SK-N-SH (cell line): ENCODE measurements at regions of chr7 and their contacts with region 1.

Region 1: DNA sequence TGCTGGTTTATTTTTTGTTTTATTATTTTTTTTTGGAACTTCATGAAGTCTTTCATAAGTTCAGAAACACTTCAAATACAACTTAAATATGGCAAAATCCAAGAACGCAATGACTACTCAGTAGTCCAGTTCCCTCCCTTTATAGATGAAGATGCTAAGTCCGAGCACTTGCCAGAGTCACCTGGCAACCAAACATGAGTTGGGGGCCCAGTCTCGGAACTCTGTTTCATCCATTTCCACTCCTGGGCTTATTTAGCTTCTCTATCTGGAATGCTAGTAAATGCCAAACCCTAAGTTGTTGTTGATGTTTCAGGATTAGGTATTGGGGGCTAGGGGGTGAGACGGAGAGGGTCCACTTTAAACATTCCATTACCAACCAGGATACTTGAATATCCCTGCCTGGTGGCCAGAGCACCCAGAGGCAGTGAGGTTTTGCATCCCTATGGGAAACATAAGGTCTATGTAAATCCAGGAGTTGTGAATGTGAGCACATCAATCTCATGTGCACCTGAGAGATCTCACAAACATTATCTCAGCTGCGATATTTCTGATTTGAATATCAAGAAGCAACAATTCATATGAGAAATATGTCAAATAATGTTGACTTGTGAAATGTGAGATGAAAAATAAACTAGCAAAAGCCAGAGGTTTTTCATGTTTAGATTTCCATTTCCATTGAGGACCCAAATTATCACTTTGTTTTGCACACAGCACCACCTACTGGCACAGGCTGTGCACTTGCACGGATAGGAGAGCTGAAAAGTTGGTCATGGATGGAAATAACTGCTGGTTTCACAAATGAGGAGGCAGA is 129.3 kb downstream of the PKD1L1 start:
- DNase-seq: peak; percentile 81
- H3K4me3 ChIP-seq: no peak overlapping the region
- H3K27ac ChIP-seq: peak overlapping the region; percentile 48 to 66; a peak in 3 of 4 replicates
- H3K4me1 ChIP-seq: peaks cover 7 to 14% of the 10 kb centered on the region in 2 experiments; a peak in 2 of 4 replicates
- H3K27me3 ChIP-seq: no peaks in the 10 kb centered on the region
- CTCF ChIP-seq: peak; percentile 100
- EP300 ChIP-seq: no peak
- RAD21 ChIP-seq: peak; percentile 99

Region 2: GRCh38 chr7:47418601-47419381 is 400.2 kb before region 1 on chr7:
- CTCF ChIA-PET with region 1: interaction called, 10 read pairs
- POLR2A ChIA-PET with region 1: no interaction called
- DNase-seq: no peak
- H3K4me3 ChIP-seq: no peak overlapping the region
- H3K27ac ChIP-seq: no peak overlapping the region
- H3K4me1 ChIP-seq: peaks cover 0 to 3% of the 10 kb centered on the region in 2 experiments; a peak in 1 of 4 replicates
- H3K27me3 ChIP-seq: no peaks in the 10 kb centered on the region
- CTCF ChIP-seq: no peak
- EP300 ChIP-seq: no peak
- RAD21 ChIP-seq: no peak

Region 3: DNA sequence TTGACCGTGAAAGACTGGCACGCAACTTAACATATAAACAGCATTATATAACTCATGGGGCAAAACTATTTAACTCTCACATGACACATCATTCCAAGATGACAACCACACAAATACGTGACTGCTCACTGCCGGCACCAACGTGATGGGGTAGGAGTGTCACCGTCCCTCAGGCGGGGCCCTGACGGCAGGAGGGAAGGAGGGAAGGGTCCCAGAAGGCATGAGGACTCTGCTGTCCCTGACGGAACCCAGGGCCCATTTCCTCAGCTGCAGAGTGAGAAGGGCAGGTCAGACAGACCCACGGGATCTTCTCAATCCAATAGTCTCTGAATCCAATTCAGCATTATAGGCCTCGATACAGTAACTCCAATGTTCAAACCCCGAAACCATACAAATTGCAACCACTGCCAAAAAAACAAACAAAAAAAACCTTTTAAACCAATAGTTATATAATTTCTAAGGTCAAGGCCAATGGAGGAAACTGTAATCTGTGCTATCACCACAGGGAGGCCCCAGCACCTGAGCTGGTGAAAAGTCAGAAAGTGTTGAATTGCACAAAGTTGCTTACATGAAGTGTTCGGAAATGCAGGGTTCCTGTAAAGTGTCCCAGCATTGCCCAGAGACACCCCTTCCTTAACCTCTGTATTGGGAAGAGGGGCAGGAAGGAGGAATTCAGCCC is 374.5 kb before region 1 on chr7:
- CTCF ChIA-PET with region 1: interaction called, 23 read pairs
- POLR2A ChIA-PET with region 1: no interaction called
- DNase-seq: peak; percentile 49
- H3K4me3 ChIP-seq: no peak overlapping the region
- H3K27ac ChIP-seq: no peak overlapping the region
- H3K4me1 ChIP-seq: peaks cover 0 to 11% of the 10 kb centered on the region in 2 experiments; a peak in 2 of 4 replicates
- H3K27me3 ChIP-seq: no peaks in the 10 kb centered on the region
- CTCF ChIP-seq: peak; percentile 76
- EP300 ChIP-seq: no peak
- RAD21 ChIP-seq: peak; percentile 72

Region 4: DNA sequence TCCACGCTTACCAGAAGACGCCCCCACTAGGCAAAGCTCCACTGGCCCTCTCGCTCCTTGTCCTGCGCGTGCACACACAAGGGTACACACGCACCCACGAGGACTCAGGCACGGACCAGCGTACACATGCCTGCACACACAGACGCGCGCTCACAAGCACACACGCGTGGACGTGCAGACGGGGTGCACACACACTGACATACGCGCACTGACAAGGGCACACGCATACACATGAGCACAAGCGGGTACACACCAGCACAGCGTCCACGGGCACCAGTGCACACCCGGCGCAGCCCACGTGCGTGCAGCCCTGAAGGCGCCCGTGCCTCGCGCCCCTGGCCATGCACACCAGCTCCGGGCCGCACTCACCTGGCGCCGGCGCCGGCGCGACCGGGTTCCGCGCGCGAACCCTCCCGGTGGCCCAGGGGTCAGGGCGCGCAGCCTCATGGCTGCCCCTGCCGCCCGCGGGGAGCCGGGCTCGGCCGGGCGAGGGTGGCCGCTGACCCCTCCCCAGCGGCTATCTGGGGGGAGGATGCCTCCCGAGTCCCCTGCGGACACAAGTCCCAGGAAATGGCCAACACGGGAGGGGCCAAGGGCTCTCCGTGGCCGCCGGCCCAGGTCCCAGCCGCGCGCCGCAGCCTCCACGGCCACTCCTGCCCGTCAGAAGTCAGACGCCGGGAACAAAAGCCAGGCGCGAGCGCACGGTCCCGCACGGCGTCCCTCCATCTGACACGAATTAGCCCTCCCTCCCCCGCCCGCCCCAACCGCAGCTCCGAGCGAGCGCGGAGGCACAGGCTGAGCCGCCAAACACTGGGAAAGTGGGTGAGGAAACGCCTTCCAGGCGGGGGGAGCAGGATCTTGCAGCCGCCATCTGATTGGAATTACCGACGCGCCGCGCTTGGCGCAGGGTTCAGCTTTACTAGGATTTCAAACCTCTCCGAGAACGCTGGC is 282.1 kb before region 1 on chr7:
- CTCF ChIA-PET with region 1: interaction called, 11 read pairs
- POLR2A ChIA-PET with region 1: no interaction called
- DNase-seq: peak; percentile 86
- H3K4me3 ChIP-seq: peak overlapping the region; percentile 38 to 49
- H3K27ac ChIP-seq: peak overlapping the region; percentile 30 to 69; a peak in 3 of 4 replicates
- H3K4me1 ChIP-seq: peaks cover 13 to 43% of the 10 kb centered on the region in 2 experiments
- H3K27me3 ChIP-seq: no peaks in the 10 kb centered on the region
- CTCF ChIP-seq: no peak
- EP300 ChIP-seq: no peak; a peak in 1 of 4 replicates
- RAD21 ChIP-seq: no peak

Region 5: DNA sequence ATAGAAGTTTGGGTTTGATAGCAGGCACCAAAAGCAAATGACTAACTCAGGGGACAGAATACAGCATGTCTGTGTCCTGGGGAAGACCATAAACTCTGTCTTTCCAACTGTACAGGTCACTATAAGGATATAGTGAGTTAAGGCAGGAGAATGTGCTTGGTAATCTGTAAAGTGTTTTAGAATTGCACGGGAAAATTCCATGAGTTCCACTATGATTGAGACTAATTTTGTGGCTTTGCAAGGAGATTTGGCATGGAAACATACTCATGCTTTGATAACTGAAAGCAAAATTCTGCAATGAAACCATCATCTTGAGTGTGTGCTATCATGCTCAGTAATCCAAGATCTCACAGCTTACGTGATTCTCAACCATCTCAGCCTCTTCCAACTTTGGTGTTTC is 23.4 kb before region 1 on chr7:
- CTCF ChIA-PET with region 1: interaction called, 22 read pairs
- POLR2A ChIA-PET with region 1: no interaction called
- DNase-seq: no peak
- H3K4me3 ChIP-seq: peak overlapping the region; percentile 3 to 4; a peak in 3 of 4 replicates
- H3K27ac ChIP-seq: peak overlapping the region; percentile 64 to 81
- H3K4me1 ChIP-seq: peaks cover 0 to 3% of the 10 kb centered on the region in 2 experiments; a peak in 3 of 4 replicates
- H3K27me3 ChIP-seq: no peaks in the 10 kb centered on the region
- CTCF ChIP-seq: no peak
- EP300 ChIP-seq: peak; percentile 56 to 85; a peak in 3 of 4 replicates
- RAD21 ChIP-seq: no peak

Region 6: GRCh38 chr7:47846117-47846836 is 27.3 kb after region 1 on chr7:
- CTCF ChIA-PET with region 1: interaction called, 10 read pairs
- POLR2A ChIA-PET with region 1: no interaction called
- DNase-seq: no peak
- H3K4me3 ChIP-seq: no peak overlapping the region
- H3K27ac ChIP-seq: no peak overlapping the region
- H3K4me1 ChIP-seq: no peaks in the 10 kb centered on the region; a peak in 2 of 4 replicates
- H3K27me3 ChIP-seq: peaks cover 6% of the 10 kb centered on the region; the same call in 1 of the 2 replicates
- CTCF ChIP-seq: no peak
- EP300 ChIP-seq: no peak
- RAD21 ChIP-seq: no peak

Region 7: DNA sequence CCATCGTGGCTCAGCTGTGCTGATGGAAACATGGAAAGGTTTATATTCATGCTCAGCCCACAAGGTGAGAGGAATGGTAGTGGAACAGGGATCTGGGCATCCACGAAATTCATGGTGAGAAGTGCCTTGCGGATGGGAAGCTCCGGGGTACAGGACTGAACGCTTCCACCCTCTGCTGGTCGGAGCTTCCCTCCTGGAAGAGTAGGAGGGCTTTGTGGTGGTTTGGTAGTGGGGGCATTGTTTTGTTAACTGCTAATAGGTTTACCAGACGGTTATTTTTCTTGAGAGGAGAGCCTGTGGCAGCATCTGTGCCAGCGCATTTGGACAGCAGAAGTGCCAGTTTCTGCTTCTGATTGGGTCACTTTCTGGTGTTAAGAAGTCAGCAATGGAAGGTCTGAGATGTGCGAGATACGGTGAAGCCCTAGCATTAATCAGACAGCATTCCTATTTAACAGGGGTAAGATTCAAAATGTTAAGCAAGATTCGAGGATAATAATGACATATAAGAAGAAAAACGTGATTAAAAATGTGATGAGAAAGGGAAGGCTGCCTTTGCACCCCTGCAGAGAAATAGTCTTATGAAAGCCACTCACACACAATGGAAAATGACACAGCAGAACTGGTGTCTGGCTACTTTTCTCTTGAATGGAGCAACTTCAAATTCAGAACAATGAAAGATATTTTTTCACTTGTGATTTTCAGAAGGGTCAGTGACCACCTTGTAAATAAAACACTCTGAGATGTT is 369.9 kb after region 1 on chr7:
- CTCF ChIA-PET with region 1: no interaction called
- POLR2A ChIA-PET with region 1: no interaction called
- DNase-seq: no peak
- H3K4me3 ChIP-seq: peak overlapping the region in 1 of 2 experiments; percentile 36; a peak in 2 of 4 replicates
- H3K27ac ChIP-seq: peak overlapping the region in 1 of 2 experiments; percentile 6; a peak in 1 of 4 replicates
- H3K4me1 ChIP-seq: no peaks in the 10 kb centered on the region
- H3K27me3 ChIP-seq: no peaks in the 10 kb centered on the region
- CTCF ChIP-seq: peak; percentile 32
- EP300 ChIP-seq: no peak
- RAD21 ChIP-seq: no peak